CD8-positive, alpha-beta T cell (primary cell): ENCODE measurements at regions of chr19 and their contacts with region 1.

Region 1: DNA sequence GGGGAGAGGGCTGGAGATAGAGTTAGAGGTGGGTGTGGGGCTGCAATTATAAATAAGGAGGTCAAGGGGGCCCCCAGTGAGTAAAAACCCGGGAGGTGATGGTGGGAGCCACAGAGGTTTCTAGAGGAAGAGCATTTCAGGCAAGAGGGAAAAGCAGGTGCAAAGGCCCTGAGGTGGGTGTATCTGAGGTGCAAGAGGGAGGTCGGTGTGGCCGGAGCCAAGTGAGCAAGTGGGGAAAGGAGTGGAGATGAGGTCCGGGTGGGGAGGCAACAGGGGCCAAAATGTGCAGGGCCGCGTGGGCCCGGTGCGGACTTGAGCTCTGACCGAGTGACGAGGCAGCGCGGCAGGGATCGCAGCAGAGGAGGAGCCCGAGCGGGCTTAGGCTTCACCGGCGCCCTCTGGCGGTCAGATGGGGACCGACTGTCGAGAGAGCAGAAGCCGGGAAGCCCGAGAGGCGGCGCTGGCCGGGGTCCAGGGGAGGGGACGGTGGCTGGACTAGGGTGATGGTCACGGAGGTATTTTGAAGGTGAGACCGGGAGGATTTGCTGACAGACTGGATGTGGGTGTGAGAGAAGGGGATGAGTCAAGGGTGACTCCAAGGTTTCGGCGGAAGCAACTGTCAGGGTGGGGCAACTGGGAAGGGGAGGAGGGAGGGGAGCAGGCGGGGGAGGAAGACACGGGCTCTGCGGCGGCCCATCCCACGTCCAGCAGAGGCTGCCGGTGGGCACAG is 17.7 kb upstream of the SPACA4 start:
- DNase-seq: peak; percentile 75 to 92 (median 87)
- ATAC-seq: peak; percentile 89
- H3K4me3 ChIP-seq: peak overlapping the region; percentile 40 to 56
- H3K4me3 Mint-ChIP-seq: peak overlapping the region; percentile 83
- H3K27ac ChIP-seq: peak overlapping the region in 1 of 2 experiments; percentile 54
- H3K27ac Mint-ChIP-seq: peak overlapping the region; percentile 70
- H3K4me1 ChIP-seq: peaks cover 7% of the 10 kb centered on the region
- H3K4me1 Mint-ChIP-seq: peaks cover 22% of the 10 kb centered on the region
- H3K27me3 ChIP-seq: peaks cover 0 to 3% of the 10 kb centered on the region in 2 experiments
- H3K27me3 Mint-ChIP-seq: peaks cover 4% of the 10 kb centered on the region
- CTCF ChIP-seq: peak; percentile 92

Region 2: DNA sequence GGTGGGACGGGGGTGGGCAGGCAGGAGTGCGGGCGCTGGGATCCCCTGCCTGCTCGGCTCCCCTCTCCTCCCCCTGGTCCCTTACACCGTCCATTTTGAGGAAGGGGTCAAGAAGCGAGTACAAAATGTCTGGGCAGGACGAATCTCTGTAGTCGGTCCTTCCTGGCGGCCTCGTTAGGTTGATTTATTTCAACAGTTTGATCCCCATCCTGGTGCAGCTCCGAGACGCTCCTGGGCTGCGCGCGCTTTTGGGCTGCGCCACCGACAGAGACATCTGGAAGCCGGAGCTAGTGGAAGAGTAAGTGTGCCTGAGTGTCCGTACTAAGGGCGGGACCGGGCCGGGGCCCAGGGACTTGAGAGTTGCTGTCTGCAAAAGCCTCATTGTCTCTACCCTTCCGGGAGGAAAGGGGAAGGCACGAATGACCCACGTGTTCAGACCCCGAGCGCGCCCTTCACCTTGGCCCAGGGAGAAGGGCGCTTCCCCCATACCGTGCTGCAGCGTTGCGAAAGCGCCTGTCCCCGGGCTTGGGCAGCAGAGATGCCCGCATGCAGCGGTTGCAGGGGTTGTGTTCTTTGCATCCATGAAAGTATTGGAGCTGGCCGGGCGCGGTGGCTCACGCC is 317.2 kb before region 1 on chr19:
- CTCF ChIA-PET with region 1: interaction called, 7 read pairs
- POLR2A ChIA-PET with region 1: no interaction called
- intact Hi-C with region 1: loop called in 1 of 2 experiments (anchors 1 kb)
- DNase-seq: peak in 3 of 9 experiments; percentile 10 to 55 (median 30)
- ATAC-seq: peak; percentile 23
- H3K4me3 ChIP-seq: peak overlapping the region; percentile 41 to 43
- H3K4me3 Mint-ChIP-seq: peak overlapping the region; percentile 82
- H3K27ac ChIP-seq: no peak overlapping the region
- H3K27ac Mint-ChIP-seq: no peak overlapping the region
- H3K4me1 ChIP-seq: peaks cover 4% of the 10 kb centered on the region
- H3K4me1 Mint-ChIP-seq: peaks cover 13% of the 10 kb centered on the region
- H3K27me3 ChIP-seq: peaks cover 0 to 14% of the 10 kb centered on the region in 2 experiments
- H3K27me3 Mint-ChIP-seq: peaks cover 12% of the 10 kb centered on the region
- CTCF ChIP-seq: no peak

Region 3: GRCh38 chr19:48308631-48309586 is 279.9 kb before region 1 on chr19:
- CTCF ChIA-PET with region 1: no interaction called
- POLR2A ChIA-PET with region 1: no interaction called
- intact Hi-C with region 1: loop called in 1 of 2 experiments (anchors 10 kb)
- DNase-seq: no peak
- ATAC-seq: no peak
- H3K4me3 ChIP-seq: no peak overlapping the region
- H3K4me3 Mint-ChIP-seq: no peak overlapping the region
- H3K27ac ChIP-seq: no peak overlapping the region
- H3K27ac Mint-ChIP-seq: no peak overlapping the region
- H3K4me1 ChIP-seq: no peaks in the 10 kb centered on the region
- H3K4me1 Mint-ChIP-seq: no peaks in the 10 kb centered on the region
- H3K27me3 ChIP-seq: no peaks in the 10 kb centered on the region
- H3K27me3 Mint-ChIP-seq: no peaks in the 10 kb centered on the region
- CTCF ChIP-seq: no peak

Region 4: DNA sequence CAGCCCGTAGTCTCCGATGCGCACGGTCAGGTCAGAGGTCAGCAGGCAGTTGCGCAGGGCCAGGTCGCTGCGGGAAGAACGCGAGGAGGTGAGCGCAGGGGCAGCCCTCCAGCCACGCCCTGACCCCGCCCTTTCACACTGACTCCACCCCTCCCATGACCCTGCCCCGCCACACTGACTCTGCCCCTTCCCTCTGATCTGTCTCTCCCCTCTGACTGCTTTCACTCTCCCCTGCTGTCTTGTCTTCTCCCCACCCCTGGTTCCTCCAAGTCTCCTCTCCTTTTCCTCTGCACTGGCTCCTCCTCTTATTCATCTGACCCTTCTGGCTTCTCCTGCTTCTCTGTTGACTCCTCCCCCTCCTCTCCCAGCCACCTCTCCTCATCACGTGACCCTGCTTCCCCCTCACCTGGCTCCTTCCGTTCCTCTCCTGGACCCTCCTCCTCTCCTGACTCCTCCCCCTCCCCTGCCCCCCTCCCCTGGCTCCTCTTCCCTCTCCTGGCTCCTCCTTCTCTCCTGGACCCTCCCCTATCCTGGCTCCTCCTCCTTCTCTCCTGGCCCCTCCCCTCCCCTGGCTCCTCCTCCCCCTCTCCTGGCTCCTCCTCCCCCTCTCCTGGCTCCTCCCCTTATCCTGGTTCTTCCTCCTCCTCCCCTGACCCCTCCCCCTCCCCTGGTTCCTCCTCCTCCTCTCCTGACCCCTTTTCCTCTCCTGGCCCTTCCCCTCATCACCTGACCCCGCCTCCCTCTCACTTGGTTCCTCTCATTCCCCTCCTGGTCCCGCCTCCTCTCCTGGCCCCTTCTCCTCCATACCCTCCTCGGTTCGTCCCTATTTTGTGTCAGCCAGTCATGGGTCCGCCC is 87.1 kb before region 1 on chr19:
- CTCF ChIA-PET with region 1: interaction called, 86 read pairs
- POLR2A ChIA-PET with region 1: no interaction called
- intact Hi-C with region 1: loop called (anchors 1 kb)
- DNase-seq: peak in 8 of 9 experiments; percentile 47 to 82 (median 52)
- ATAC-seq: peak; percentile 74
- H3K4me3 ChIP-seq: peak overlapping the region; percentile 14 to 21
- H3K4me3 Mint-ChIP-seq: peak overlapping the region; percentile 74
- H3K27ac ChIP-seq: no peak overlapping the region
- H3K27ac Mint-ChIP-seq: no peak overlapping the region
- H3K4me1 ChIP-seq: peaks cover 11% of the 10 kb centered on the region
- H3K4me1 Mint-ChIP-seq: peaks cover 16% of the 10 kb centered on the region
- H3K27me3 ChIP-seq: peaks cover 0 to 11% of the 10 kb centered on the region in 2 experiments
- H3K27me3 Mint-ChIP-seq: no peaks in the 10 kb centered on the region
- CTCF ChIP-seq: no peak

Region 5: DNA sequence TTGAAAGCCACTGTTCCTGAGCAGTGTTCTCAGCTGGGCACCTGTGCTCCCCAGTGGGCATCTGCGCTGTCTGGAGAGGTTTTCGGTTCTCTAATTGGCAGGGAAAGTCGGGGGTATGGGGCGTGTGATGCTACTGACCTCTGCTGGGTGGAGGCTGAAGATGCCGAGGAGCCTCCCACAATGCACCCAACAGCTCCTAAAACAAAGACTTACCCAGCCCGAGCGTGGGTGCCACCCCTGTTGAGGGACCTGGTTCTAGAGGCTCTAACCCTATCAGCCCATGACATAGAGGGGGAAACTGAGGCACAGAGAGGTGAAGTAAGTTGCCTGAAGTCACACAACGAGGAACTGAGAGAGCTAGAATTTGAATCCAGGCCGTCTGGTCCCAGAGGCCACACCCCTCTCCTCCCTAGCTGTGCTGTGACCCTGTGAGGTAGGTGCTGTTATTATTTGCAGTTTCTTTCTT is 20.0 kb after region 1 on chr19:
- CTCF ChIA-PET with region 1: interaction called, 32 read pairs
- POLR2A ChIA-PET with region 1: interaction called, 5 read pairs
- intact Hi-C with region 1: loop called in 1 of 2 experiments (anchors 2 kb)
- DNase-seq: peak in 8 of 9 experiments; percentile 28 to 76 (median 54)
- ATAC-seq: peak; percentile 91
- H3K4me3 ChIP-seq: no peak overlapping the region
- H3K4me3 Mint-ChIP-seq: no peak overlapping the region
- H3K27ac ChIP-seq: no peak overlapping the region
- H3K27ac Mint-ChIP-seq: no peak overlapping the region
- H3K4me1 ChIP-seq: peaks cover 6% of the 10 kb centered on the region
- H3K4me1 Mint-ChIP-seq: peaks cover 4% of the 10 kb centered on the region
- H3K27me3 ChIP-seq: no peaks in the 10 kb centered on the region
- H3K27me3 Mint-ChIP-seq: no peaks in the 10 kb centered on the region
- CTCF ChIP-seq: peak; percentile 50

Region 6: GRCh38 chr19:48660854-48661731 is 72.3 kb after region 1 on chr19:
- CTCF ChIA-PET with region 1: no interaction called
- POLR2A ChIA-PET with region 1: no interaction called
- intact Hi-C with region 1: no loop called
- DNase-seq: peak; percentile 53 to 92 (median 79)
- ATAC-seq: peak; percentile 90
- H3K4me3 ChIP-seq: peak overlapping the region; percentile 31 to 36
- H3K4me3 Mint-ChIP-seq: peak overlapping the region; percentile 70
- H3K27ac ChIP-seq: peak overlapping the region; percentile 56 to 68
- H3K27ac Mint-ChIP-seq: peak overlapping the region; percentile 90
- H3K4me1 ChIP-seq: peaks cover 11% of the 10 kb centered on the region
- H3K4me1 Mint-ChIP-seq: peaks cover 9% of the 10 kb centered on the region
- H3K27me3 ChIP-seq: no peaks in the 10 kb centered on the region
- H3K27me3 Mint-ChIP-seq: no peaks in the 10 kb centered on the region
- CTCF ChIP-seq: no peak